Heart left ventricle (tissue), 16 donors: ENCODE measurements at regions of chr4 and their contacts with region 1.

Region 1: DNA sequence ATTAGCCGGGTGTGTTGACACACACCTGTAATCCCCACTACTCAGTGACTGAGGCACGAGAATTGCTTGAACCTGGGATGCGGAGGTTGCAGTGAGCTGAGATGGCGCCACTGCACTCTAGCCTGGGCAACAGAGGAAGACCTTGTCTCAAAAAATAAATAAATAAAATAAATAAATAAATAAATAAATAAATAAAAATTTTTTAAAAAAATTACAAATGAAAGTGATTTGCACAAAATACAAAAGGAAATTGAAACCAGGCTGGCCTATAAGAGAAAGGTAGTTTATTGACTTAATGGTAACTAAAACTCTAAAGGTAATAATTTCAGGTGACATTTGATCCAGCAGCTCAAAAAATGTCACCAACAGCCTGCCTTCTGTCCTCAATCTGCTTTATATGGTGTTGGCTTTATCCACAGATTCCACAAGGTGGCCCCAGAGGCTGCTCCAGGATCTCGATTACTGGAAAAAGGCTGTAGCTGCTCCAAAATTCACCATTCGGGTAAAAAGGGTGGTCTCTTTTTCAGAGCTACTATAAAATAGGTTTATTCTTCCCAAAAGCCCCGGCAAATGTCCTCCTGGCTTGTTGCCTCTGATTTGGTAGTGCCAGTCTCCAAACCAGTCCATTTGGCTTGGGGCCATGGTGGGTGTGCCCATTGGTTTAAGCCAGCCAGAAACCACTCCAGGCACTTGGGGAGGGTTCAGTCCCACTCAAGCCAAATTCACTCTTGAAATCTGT is 61.4 kb upstream of the TRIM2 start:
- DNase-seq: peak; percentile 62 to 82 (median 71)
- ATAC-seq: peak in 3 of 4 donors; percentile 78 to 85 (median 79)
- H3K4me3 ChIP-seq: peak overlapping the region in 4 of 12 donors; percentile 3 to 24 (median 14)
- H3K27ac ChIP-seq: no peak overlapping the region
- H3K4me1 ChIP-seq: peaks cover 0 to 12% (median 2%) of the 10 kb centered on the region in 12 donors
- H3K27me3 ChIP-seq: no peaks in the 10 kb centered on the region
- CTCF ChIP-seq: peak; percentile 66 to 91 (median 84)
- POLR2A ChIP-seq: no peak

Region 2: DNA sequence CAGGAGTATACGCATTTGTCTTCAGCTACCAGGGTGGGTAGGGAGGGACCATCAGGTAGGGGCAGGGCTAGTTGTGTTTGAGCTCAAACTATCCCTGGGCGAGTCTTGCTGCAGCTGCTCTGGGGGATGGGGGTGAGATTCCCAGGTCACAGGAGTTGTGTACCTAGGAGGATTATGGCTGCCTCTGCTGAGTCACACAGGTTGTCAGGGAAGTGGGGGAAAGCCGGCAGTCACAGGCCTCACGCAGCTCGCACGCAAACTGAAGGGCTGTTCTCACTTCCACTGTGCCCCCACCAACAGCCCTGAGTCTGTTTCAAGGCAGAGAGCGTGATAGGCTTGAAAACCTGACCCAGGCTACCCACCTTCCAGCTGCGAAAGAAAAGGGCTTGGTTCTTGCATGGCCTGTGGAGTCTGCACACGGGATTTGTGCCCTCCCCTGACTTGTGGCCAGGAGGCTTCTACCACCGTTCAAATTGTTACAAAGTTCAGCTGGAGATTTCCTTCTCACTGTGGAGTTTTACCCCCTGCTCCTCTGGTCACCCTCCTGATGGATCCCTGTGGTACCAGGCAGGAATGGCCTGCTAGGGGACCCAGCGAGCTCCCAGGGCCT is 299.3 kb before region 1 on chr4:
- intact Hi-C with region 1: no loop called
- DNase-seq: no peak
- ATAC-seq: no peak
- H3K4me3 ChIP-seq: no peak overlapping the region
- H3K27ac ChIP-seq: no peak overlapping the region
- H3K4me1 ChIP-seq: no peaks in the 10 kb centered on the region
- H3K27me3 ChIP-seq: no peaks in the 10 kb centered on the region
- CTCF ChIP-seq: no peak
- POLR2A ChIP-seq: no peak

Region 3: DNA sequence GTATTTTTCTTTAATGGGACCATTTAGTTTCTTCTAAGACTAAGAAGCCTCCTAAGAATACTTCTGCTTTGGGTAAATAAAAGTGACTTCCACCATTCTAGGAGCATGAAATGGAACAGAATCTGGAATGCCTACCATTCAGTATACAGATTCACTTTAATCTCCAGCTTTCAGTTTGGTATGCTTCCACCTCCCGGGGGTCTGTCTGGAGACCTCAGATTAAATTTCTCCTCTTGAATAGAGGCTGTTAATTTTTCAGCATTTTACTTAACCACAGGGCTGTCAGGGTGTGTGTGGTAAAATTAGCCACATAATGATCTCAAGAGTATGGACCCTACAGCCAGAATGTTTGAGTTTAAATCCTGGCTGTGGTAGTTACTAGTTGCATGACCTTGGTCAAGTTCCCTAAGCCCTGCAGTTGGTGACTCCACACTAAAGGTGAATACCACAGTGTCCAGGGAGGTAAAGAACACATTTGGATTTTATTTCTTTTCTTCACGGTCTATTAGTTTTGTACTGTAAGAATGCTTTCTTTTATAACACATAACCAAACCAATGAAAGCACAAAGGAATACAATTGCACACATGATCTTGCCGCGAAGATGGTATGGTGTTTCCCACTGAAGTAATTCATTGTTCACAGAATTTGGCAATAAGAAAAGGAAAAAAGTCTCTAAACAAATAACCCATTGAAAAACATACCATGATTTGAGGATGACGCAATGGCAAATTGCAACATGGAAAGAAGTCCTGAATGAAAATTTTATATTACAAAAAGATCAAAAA is 24.0 kb after region 1 on chr4:
- intact Hi-C with region 1: no loop called
- DNase-seq: no peak
- ATAC-seq: no peak
- H3K4me3 ChIP-seq: no peak overlapping the region
- H3K27ac ChIP-seq: no peak overlapping the region
- H3K4me1 ChIP-seq: no peaks in the 10 kb centered on the region
- H3K27me3 ChIP-seq: no peaks in the 10 kb centered on the region
- CTCF ChIP-seq: no peak
- POLR2A ChIP-seq: no peak

Region 4: GRCh38 chr4:153204247-153205027 is 61.6 kb after region 1 on chr4 and contains the start of gene TRIM2:
- intact Hi-C with region 1: loop called in 2 of 10 experiments (anchors 5 kb)
- DNase-seq: peak; percentile 67 to 82 (median 72)
- ATAC-seq: peak; percentile 84 to 95 (median 87)
- H3K4me3 ChIP-seq: peak within 1 kb of the TSS in 11 of 12 donors; percentile 3 to 60 (median 40)
- H3K27ac ChIP-seq: peak within 1 kb of the TSS in 6 of 12 donors; percentile 10 to 63 (median 36)
- H3K4me1 ChIP-seq: peaks cover 0 to 14% (median 0%) of the 10 kb centered on the region in 12 donors
- H3K27me3 ChIP-seq: no peaks in the 10 kb centered on the region
- CTCF ChIP-seq: no peak
- POLR2A ChIP-seq: peak in 1 of 2 donors; percentile 50
- total RNA-seq, gene TRIM2: 13.0 to 30.5 (median 19.0) TPM

Region 5: GRCh38 chr4:153318696-153319320 is 175.9 kb after region 1 on chr4:
- intact Hi-C with region 1: loop called (anchors 1 to 5 kb)
- DNase-seq: no peak
- ATAC-seq: peak in 3 of 4 donors; percentile 74 to 77 (median 77)
- H3K4me3 ChIP-seq: no peak overlapping the region
- H3K27ac ChIP-seq: no peak overlapping the region
- H3K4me1 ChIP-seq: no peaks in the 10 kb centered on the region
- H3K27me3 ChIP-seq: no peaks in the 10 kb centered on the region
- CTCF ChIP-seq: peak; percentile 53 to 81 (median 74)
- POLR2A ChIP-seq: no peak

Region 6: DNA sequence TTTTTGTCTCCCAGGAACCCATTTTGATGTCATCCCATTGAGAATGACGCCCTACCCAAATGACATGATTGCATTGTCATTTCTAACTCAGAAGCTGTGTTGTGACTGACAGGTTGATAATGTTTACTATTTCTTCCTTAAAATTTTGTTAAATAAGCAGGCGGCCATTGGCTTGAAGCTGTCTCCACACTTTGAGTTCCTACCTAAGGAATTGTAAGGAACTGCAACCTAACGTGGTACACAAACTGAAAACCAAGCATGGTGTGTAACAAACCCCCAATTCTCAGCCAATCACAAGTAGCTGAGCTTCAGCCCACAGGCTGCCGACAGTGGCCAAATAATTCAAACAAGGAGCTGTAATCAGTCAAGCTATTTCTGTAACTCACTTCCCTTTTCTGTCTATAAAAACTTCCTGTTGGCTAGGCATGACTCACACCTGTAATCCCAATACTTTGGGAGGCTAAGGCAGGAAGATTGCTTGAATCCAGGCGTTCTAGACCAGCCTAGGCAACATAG is 198.8 kb after region 1 on chr4:
- intact Hi-C with region 1: no loop called
- DNase-seq: no peak
- ATAC-seq: peak in 1 of 4 donors; percentile 32
- H3K4me3 ChIP-seq: no peak overlapping the region
- H3K27ac ChIP-seq: no peak overlapping the region
- H3K4me1 ChIP-seq: peaks cover 0 to 25% (median 13%) of the 10 kb centered on the region in 12 donors
- H3K27me3 ChIP-seq: no peaks in the 10 kb centered on the region
- CTCF ChIP-seq: no peak
- POLR2A ChIP-seq: no peak

Region 7: GRCh38 chr4:153393397-153393796 is 250.5 kb after region 1 on chr4:
- intact Hi-C with region 1: no loop called
- DNase-seq: no peak
- ATAC-seq: no peak
- H3K4me3 ChIP-seq: no peak overlapping the region
- H3K27ac ChIP-seq: no peak overlapping the region
- H3K4me1 ChIP-seq: no peaks in the 10 kb centered on the region
- H3K27me3 ChIP-seq: no peaks in the 10 kb centered on the region
- CTCF ChIP-seq: no peak
- POLR2A ChIP-seq: no peak

Region 8: GRCh38 chr4:153643406-153644383 is 500.8 kb after region 1 on chr4:
- intact Hi-C with region 1: loop called in 1 of 10 experiments (anchors 5 kb)
- DNase-seq: no peak
- ATAC-seq: peak in 2 of 4 donors; percentile 57 to 63
- H3K4me3 ChIP-seq: no peak overlapping the region
- H3K27ac ChIP-seq: no peak overlapping the region
- H3K4me1 ChIP-seq: peaks cover 0 to 42% (median 0%) of the 10 kb centered on the region in 12 donors
- H3K27me3 ChIP-seq: no peaks in the 10 kb centered on the region
- CTCF ChIP-seq: peak in 11 of 12 donors; percentile 2 to 54 (median 35)
- POLR2A ChIP-seq: no peak

Region 9: DNA sequence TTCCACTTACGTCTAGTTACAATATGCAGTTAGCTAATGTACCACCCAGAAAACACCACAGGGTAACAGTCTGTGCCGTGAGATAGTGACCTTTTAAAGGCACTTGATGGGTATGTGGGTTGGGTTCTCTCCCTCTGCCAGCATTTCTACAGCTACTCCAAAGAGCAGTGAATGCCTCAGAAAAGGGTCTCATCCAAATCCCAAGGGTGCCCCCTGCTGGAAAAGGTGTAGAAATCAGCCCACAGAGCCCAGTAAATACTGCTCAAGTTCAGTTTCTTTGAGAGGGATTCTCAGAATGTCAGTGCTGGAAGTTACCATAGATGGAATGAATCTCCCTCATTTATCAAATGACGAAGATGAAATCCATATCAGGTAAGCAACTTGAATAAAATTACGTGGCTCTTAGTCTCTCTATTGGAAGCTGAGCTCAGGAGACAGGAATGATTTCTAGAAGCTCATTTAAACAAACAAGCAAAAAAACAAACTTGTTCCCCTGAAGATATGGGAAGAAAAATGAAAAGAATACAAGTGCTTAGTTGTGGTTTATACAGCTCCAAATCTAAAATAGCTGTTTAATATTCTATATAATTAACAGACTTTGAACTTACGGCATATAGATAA is 607.4 kb after region 1 on chr4:
- intact Hi-C with region 1: loop called in 1 of 10 experiments (anchors 10 kb)
- DNase-seq: peak in 3 of 5 donors; percentile 39 to 61 (median 56)
- ATAC-seq: peak; percentile 51 to 77 (median 70)
- H3K4me3 ChIP-seq: no peak overlapping the region
- H3K27ac ChIP-seq: no peak overlapping the region
- H3K4me1 ChIP-seq: peaks cover 0 to 28% (median 0%) of the 10 kb centered on the region in 12 donors
- H3K27me3 ChIP-seq: peaks cover 0 to 5% (median 0%) of the 10 kb centered on the region in 9 donors
- CTCF ChIP-seq: peak; percentile 49 to 75 (median 64)
- POLR2A ChIP-seq: no peak